ENCODE measurements at regions of chr6 and their contacts with region 1.

Region 1: GRCh38 chr6:133512410-133513016 is 271.4 kb downstream of the EYA4 start:
- DNase-seq: peak; percentile 37
- ATAC-seq: peak in 1 of 2 donors; percentile 57

Region 2: GRCh38 chr6:132830334-132830751 is 682.2 kb before region 1 on chr6:
- intact Hi-C with region 1: loop called in 1 of 2 experiments (anchors 10 kb)
- DNase-seq: no peak
- ATAC-seq: peak in 1 of 2 donors; percentile 30